ENCODE measurements at regions of chr9 and their contacts with region 1.

Region 1: DNA sequence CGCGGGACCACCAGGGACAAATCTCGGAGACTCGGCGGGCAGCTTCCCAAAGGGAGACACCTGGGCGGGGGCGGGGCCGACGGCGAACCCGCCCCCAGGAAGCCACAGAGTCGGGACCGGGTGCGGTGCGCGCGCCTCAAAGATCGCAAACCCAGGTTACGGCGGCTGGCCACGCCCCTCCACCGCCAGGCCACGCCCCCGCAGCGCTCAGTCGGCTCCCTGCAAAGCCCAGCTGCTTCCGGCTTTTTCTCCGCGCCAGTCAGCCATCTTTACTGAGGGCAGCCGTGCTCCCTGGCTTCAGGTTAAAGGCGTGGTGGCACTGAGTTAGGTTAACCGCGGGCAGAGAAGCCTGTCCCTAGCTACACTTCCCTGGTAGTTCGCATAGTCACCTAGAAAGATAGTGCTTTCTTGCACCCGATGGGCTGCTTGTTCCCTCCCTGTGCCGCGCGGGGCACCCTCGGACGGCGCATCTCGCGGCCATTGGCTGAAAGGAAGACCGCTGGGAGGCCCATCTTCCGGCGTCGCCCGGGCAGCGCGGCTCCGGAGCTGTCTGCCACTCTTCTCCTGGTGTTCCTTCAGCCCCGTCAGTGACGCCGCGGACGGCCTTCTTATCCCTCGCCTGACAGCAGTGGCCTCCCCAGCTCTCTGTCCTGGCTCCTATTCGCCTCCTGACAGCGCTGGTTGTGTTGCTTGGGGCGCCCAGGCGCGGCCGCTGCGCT is at the start of gene TBC1D2:
- DNase-seq: peak; percentile 97
- ATAC-seq: peak; percentile 93
- H3K4me3 Mint-ChIP-seq: peak within 1 kb of the TSS; percentile 85
- H3K27ac Mint-ChIP-seq: peak within 1 kb of the TSS; percentile 97
- H3K4me1 Mint-ChIP-seq: peaks cover 16% of the 10 kb centered on the region
- H3K27me3 Mint-ChIP-seq: no peaks in the 10 kb centered on the region
- CTCF ChIP-seq: peak; percentile 18
- total RNA-seq, gene TBC1D2: 1.5 TPM

Region 2: DNA sequence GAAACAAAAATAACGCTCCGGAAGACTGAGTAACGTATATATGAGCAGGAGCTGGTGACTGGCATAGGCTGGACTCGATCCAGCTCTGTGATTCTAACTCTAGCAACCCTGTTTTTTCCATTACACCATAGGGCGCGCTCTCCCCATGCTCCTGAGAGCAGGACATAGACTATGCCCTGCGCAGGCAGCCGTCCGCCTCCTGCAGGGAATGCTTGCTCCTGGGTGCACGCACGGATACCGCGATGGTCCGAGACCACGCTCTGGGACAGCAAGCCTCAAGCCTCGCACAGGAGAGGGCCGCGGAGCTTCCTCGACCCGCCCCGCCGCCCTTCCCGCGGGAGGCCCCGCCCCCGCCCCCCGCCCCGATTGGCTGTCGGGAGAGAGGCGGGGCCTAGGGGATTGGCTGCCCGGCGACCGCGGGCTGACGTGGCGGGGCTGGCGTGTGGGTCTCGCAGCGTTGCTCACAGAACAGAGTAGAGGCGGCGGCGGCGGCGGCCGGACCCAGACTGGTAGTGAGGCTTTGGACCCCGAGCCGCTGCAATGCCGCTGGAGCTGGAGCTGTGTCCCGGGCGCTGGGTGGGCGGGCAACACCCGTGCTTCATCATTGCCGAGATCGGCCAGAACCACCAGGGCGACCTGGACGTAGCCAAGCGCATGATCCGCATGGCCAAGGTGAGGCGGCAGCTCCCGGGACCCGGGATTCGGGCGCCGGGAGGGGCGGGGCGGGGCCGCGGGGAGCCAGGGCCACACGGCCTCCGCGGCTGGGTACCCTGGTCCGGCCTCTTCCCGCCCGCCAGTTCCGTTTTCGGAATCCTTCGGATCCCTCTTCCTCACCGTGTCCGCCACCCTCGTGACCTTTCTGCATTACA is 199.2 kb before region 1 on chr9 and contains the start of gene NANS:
- CTCF ChIA-PET with region 1: no interaction called
- POLR2A ChIA-PET with region 1: interaction called, 14 read pairs
- intact Hi-C with region 1: no loop called
- DNase-seq: peak; percentile 96
- ATAC-seq: peak; percentile 95
- H3K4me3 Mint-ChIP-seq: peak within 1 kb of the TSS; percentile 91
- H3K27ac Mint-ChIP-seq: peak within 1 kb of the TSS; percentile 94
- H3K4me1 Mint-ChIP-seq: peaks cover 32% of the 10 kb centered on the region
- H3K27me3 Mint-ChIP-seq: no peaks in the 10 kb centered on the region
- CTCF ChIP-seq: no peak
- total RNA-seq, gene NANS: 51.2 to 51.8 TPM

Region 3: GRCh38 chr9:98192503-98193335 is 63.0 kb before region 1 on chr9 and contains the start of gene CORO2A:
- CTCF ChIA-PET with region 1: interaction called, 8 read pairs
- POLR2A ChIA-PET with region 1: interaction called, 13 read pairs
- intact Hi-C with region 1: no loop called
- DNase-seq: peak; percentile 81
- ATAC-seq: peak; percentile 80
- H3K4me3 Mint-ChIP-seq: peak within 1 kb of the TSS; percentile 81
- H3K27ac Mint-ChIP-seq: peak within 1 kb of the TSS; percentile 49
- H3K4me1 Mint-ChIP-seq: peaks cover 32% of the 10 kb centered on the region
- H3K27me3 Mint-ChIP-seq: no peaks in the 10 kb centered on the region
- CTCF ChIP-seq: peak; percentile 25
- total RNA-seq, gene CORO2A: 12.2 to 13.4 TPM

Region 4: DNA sequence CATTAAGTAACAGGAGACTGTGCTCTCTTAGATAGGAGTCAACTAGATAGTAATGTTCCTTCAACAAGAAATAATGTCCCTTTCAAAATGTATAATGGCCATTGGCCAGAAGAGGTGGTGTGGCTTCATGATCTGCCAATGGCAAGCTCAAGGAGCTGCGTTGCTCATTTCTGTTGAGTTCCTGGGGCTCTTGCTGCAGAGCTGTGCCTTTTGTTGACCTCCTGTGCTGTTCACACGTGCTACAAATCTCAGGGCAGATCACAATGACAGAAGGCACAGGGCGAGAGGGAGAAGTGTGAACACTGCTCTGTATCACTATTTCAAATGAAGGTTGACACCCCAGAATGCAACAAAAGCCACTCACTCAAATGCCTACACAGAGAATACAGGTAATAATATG is 15.7 kb after region 1 on chr9:
- CTCF ChIA-PET with region 1: no interaction called
- POLR2A ChIA-PET with region 1: no interaction called
- intact Hi-C with region 1: no loop called
- DNase-seq: no peak
- ATAC-seq: no peak
- H3K4me3 Mint-ChIP-seq: no peak overlapping the region
- H3K27ac Mint-ChIP-seq: no peak overlapping the region
- H3K4me1 Mint-ChIP-seq: no peaks in the 10 kb centered on the region
- H3K27me3 Mint-ChIP-seq: no peaks in the 10 kb centered on the region
- CTCF ChIP-seq: no peak

Measured in activated CD8-positive, alpha-beta T cell treated with anti-CD3 and anti-CD28 coated beads for 36 hours (primary cell).